Activated naive CD4-positive, alpha-beta T cell treated with anti-CD3 and anti-CD28 coated beads for 36 hours (primary cell): ENCODE measurements at regions of chrX and their contacts with region 1.

Region 1: GRCh38 chrX:51860679-51861078 is 32.7 kb upstream of the MAGED1 start:
- DNase-seq: peak; percentile 5
- H3K4me3 Mint-ChIP-seq: no peak overlapping the region
- H3K27ac Mint-ChIP-seq: no peak overlapping the region
- H3K4me1 Mint-ChIP-seq: peaks cover 5% of the 10 kb centered on the region
- H3K27me3 Mint-ChIP-seq: no peaks in the 10 kb centered on the region

Region 2: DNA sequence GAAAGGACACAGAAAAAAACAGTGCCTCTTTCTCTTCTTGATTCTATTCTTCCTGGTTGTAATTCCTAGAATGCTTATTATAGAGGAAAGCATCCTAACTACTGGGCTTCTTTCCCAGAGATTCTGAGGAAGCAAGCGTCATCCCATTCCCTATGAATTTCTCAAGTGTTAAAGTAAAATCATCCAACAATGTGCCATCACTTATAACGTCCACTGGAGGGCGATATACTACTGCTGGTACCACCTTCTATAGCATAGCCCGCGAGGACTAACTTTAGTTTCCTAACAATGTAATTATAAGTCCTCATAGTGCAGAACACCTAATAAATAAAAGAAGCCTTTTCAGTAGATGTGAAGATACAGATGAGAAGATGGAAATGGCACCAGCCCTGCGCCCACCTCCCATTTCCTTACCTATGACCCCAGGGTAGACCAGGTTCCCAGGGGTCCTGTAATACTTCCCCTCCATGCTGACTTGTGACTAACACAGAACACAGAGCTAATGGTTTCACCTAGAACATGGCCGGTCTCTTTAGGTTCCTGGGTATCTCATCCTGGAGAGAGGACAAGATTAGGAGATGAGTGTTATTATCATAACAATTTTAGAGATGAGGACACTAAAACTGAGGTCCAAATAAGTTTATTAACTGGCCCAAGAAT is 246.2 kb before region 1 on chrX:
- CTCF ChIA-PET with region 1: no interaction called
- intact Hi-C with region 1: loop called (anchors 10 kb)
- DNase-seq: no peak
- H3K4me3 Mint-ChIP-seq: no peak overlapping the region
- H3K27ac Mint-ChIP-seq: no peak overlapping the region
- H3K4me1 Mint-ChIP-seq: peaks cover 3% of the 10 kb centered on the region
- H3K27me3 Mint-ChIP-seq: peaks cover 29% of the 10 kb centered on the region

Region 3: DNA sequence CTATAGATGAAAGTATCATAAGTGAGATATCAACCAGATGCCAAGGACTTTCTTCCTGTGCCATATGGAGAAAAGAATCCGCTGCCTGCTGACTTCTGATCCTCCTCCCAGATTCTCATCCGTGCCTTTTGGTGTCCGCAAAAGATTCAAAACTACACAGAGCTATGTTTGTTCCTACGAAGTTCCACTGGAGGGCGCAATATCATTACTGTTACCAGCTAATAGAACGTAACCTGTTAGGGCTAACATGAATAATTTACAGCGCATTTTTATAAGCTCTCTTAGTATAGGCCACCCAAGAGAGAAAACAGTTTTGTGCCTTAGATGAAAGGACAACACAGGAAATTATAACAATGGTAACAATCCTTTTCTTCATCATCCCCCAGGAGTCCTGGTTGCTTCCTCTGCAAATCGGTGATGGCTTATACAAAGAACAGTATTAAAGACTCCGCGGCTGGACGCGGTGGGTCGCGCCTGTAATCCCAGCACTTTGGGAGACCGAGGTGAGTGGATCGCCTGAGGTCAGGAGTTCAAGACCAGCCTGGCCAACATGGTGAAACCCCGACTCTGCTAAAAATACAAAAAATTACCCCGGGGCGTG is 219.2 kb before region 1 on chrX:
- CTCF ChIA-PET with region 1: interaction called, 9 read pairs
- intact Hi-C with region 1: loop called (anchors 2 kb)
- DNase-seq: peak; percentile 17
- H3K4me3 Mint-ChIP-seq: no peak overlapping the region
- H3K27ac Mint-ChIP-seq: no peak overlapping the region
- H3K4me1 Mint-ChIP-seq: no peaks in the 10 kb centered on the region
- H3K27me3 Mint-ChIP-seq: peaks cover 18% of the 10 kb centered on the region